GM18951 (cell line): ENCODE measurements at regions of chr20 and their contacts with region 1.

Region 1: GRCh38 chr20:4108495-4109306 is 93.3 kb upstream of the RNF24 start:
- POLR2A ChIP-seq: no peak

Region 2: DNA sequence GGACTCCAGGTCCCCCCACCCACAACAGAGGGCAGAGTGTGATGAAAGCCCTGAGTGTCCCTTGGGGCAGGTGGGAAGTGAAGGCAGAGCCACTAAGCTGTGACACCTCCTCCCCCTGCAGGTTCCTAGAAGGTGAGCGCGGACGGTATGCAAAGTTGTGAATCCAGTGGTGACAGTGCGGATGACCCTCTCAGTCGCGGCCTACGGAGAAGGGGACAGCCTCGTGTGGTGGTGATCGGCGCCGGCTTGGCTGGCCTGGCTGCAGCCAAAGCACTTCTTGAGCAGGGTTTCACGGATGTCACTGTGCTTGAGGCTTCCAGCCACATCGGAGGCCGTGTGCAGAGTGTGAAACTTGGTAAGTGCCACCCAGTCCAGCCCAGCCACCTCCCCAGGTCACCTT is 66.2 kb after region 1 on chr20:
- in situ Hi-C with region 1: loop called (anchors 5 kb)
- POLR2A ChIP-seq: no peak

Region 3: GRCh38 chr20:4272225-4272624 is 163.5 kb after region 1 on chr20:
- in situ Hi-C with region 1: no loop called
- POLR2A ChIP-seq: no peak

Region 4: DNA sequence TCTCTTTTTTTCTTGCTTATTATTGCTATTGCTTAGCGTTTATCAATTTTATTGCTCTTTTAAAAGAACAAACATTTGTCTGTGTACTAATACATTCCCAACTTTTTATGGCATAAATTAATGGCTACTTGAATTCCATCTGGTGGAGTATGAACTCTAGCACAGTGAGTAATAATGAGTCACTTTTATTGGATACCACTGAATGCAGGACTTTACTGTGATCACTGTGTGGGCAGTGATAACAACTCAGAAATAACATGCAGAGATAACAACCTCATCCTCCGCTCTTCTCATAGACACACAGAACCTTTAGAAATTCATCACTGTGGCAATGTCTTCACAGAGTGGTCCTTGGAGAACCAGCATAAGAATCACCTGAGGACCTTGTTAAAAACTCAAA is 438.1 kb after region 1 on chr20:
- in situ Hi-C with region 1: no loop called
- POLR2A ChIP-seq: no peak